Left colon (tissue), 2 donors: ENCODE measurements at regions of chr2 and their contacts with region 1.

Region 1: DNA sequence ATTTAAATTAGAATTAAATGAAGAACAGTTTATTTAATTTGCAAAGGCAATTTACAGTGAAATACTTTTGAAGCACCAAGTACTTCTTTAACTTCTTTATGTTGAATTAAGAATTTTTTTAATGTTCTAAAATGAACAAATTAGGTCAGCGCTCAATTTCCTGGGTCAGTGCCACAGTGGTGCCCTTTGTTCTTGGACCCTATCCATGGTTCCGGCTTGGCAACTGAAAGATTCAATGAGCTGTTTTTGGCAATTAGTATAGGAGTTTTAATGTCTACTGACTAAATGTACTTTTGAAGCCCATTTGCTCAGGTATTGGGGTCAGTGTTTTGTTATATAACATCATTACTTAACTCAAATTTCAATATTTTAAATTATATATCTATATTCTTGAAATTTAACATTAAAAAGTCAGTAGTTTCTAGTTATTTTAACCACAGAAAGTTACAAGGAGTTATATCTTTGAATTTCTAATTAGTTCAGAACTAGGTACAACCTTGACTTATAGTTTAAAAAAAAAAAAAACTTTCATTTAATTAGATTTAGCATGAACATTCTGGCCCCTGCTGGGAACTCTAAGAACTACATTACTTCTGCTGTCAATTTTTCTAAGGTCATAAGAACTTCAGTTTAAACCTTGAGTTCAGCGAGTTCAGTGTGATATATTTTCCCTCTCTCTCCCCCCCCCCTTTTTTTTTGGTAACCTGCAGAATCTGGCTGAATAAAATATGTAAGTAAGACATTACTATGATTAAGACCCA is 7.6 kb upstream of the MSTN start:
- DNase-seq: peak in 1 of 2 donors; percentile 21
- ATAC-seq: peak; percentile 63

Region 2: GRCh38 chr2:189751080-189751658 is 318.9 kb before region 1 on chr2:
- intact Hi-C with region 1: loop called in 1 of 2 experiments (anchors 5 kb)
- DNase-seq: peak in 1 of 2 donors; percentile 37
- ATAC-seq: peak; percentile 72

Region 3: DNA sequence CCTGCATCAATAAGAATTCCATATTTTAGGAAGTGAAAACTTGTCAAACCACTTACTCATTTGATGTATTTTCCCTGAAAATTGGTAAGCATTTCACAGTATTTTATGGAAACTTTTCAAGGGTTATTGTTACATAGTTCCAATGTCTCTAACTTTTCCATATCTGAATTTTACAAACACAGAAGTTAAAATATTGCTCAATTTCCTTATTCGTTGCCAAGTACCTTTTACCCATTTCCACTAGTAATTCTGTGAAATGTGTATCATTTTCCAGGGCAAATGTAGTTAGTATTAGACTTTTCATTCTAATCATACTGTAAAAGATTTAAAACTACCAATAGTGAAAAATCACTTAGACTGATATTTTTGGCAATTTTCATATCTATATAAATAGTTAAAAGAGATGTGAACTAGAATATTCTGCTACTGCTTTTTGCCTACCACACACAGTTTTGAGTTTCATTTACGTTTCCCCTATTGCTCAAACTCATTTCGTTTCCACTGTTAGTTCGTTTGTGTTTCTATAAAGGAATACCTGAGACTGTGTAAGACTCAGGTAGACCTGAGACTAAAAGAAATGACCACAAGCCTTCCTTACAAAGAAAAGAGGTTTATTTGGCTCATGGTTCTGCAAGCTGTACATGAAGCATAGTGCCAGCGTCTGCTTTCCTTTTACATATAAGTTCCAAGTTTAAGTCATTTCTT is 199.6 kb before region 1 on chr2:
- intact Hi-C with region 1: no loop called
- DNase-seq: no peak
- ATAC-seq: no peak